CD8-positive, alpha-beta memory T cell (primary cell): ENCODE measurements at regions of chr13 and their contacts with region 1.

Region 1: GRCh38 chr13:40764587-40765403 is 6.2 kb downstream of the MRPS31 start:
- DNase-seq: no peak
- H3K4me3 ChIP-seq: no peak overlapping the region
- H3K4me3 Mint-ChIP-seq: no peak overlapping the region
- H3K27ac ChIP-seq: no peak overlapping the region
- H3K27ac Mint-ChIP-seq: peak overlapping the region; percentile 37 to 94 (median 73)
- H3K4me1 ChIP-seq: peaks cover 20% of the 10 kb centered on the region
- H3K4me1 Mint-ChIP-seq: peaks cover 38 to 43% (median 40%) of the 10 kb centered on the region in 3 donors
- H3K27me3 ChIP-seq: no peaks in the 10 kb centered on the region
- H3K27me3 Mint-ChIP-seq: no peaks in the 10 kb centered on the region

Region 2: DNA sequence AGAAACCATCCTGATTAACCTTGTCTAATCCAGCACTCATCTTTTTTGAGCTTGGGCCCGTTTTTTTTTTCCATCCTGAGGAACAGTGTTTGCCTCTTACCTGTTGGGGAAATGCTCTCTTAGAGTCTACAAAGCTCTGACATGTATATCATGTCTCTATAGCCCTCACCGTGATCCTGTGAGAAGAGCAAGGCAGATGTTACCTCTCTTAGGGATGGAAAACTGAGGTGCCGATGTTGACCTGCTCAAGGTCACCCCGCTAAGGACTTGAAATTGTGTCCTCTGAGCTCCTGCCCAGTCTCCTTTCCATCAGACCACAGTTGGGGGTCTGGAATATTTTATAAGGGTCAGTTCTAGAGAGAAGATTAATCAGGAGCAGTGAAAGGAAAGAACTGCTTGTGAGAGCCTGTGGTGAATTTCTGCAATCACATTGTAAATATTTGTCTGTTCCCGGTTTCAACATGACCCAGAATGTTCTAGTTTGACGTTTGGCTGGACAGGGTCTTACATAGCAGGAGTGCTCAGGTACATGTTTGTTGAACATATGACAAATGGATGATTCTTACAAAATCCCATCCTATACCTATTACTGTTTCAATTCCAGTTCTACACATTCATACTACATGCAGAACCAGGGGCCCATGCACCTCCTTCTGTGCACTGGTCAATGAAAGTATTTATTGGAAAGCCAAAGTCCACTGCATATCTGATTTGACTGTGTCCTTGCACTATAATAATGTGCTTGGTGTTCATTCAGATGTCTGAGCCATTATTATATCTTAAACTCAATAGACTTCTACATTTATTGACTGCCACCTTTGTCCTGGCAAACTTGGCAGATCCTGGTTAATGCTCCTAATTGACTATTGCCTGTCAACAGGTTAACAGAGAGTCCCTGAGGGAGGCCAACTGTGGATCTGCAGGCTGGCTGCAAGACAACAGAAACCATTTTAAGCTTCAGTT is 36.7 kb after region 1 on chr13:
- CTCF ChIA-PET with region 1: interaction called, 3 read pairs
- POLR2A ChIA-PET with region 1: interaction called, 12 read pairs
- DNase-seq: no peak
- H3K4me3 ChIP-seq: no peak overlapping the region
- H3K4me3 Mint-ChIP-seq: no peak overlapping the region
- H3K27ac ChIP-seq: no peak overlapping the region
- H3K27ac Mint-ChIP-seq: peak overlapping the region in 5 of 8 donors; percentile 6 to 60 (median 29)
- H3K4me1 ChIP-seq: no peaks in the 10 kb centered on the region
- H3K4me1 Mint-ChIP-seq: peaks cover 4 to 11% (median 8%) of the 10 kb centered on the region in 3 donors
- H3K27me3 ChIP-seq: no peaks in the 10 kb centered on the region
- H3K27me3 Mint-ChIP-seq: no peaks in the 10 kb centered on the region

Region 3: DNA sequence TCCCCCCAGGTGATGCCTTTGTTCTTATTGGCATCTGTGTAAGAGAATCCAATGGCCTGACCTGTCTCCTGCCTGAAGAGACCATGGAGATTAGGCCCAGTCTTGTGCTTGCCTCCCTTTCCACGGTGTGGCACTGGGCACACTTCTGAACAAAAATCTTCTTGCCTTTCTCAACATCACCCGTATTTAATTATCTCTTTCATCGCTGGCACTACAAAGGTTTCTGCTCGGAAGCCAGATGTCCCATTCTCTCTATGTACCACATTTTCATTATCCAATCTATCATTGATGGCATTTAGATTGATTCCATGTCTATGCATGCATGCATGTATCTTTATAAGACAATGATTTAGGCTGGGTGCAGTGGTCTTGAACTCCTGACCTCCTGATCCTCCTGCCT is 98.9 kb after region 1 on chr13:
- CTCF ChIA-PET with region 1: no interaction called
- POLR2A ChIA-PET with region 1: no interaction called
- DNase-seq: no peak
- H3K4me3 ChIP-seq: no peak overlapping the region
- H3K4me3 Mint-ChIP-seq: no peak overlapping the region
- H3K27ac ChIP-seq: no peak overlapping the region
- H3K27ac Mint-ChIP-seq: no peak overlapping the region
- H3K4me1 ChIP-seq: no peaks in the 10 kb centered on the region
- H3K4me1 Mint-ChIP-seq: no peaks in the 10 kb centered on the region
- H3K27me3 ChIP-seq: no peaks in the 10 kb centered on the region
- H3K27me3 Mint-ChIP-seq: no peaks in the 10 kb centered on the region